Lower lobe of right lung (tissue), 2 donors: ENCODE measurements at regions of chr22 and their contacts with region 1.

Region 1: GRCh38 chr22:22446517-22446916 is 62.0 kb downstream of the ZNF280B start:
- DNase-seq: no peak
- ATAC-seq: no peak
- H3K4me3 ChIP-seq: no peak overlapping the region
- H3K27ac ChIP-seq: no peak overlapping the region
- H3K4me1 ChIP-seq: no peaks in the 10 kb centered on the region
- H3K27me3 ChIP-seq: no peaks in the 10 kb centered on the region
- CTCF ChIP-seq: no peak

Region 2: GRCh38 chr22:22508274-22509176 is 62.0 kb after region 1 on chr22 and contains the start of gene ZNF280B:
- intact Hi-C with region 1: loop called (anchors 10 kb)
- DNase-seq: peak; percentile 76
- ATAC-seq: peak; percentile 93 to 97
- H3K4me3 ChIP-seq: peak within 1 kb of the TSS; percentile 52
- H3K27ac ChIP-seq: no peak within 1 kb of the TSS
- H3K4me1 ChIP-seq: no peaks in the 10 kb centered on the region
- H3K27me3 ChIP-seq: no peaks in the 10 kb centered on the region
- CTCF ChIP-seq: peak; percentile 40
- total RNA-seq, gene ZNF280B: 0.86 TPM

Region 3: GRCh38 chr22:22616636-22617035 is 170.1 kb after region 1 on chr22:
- intact Hi-C with region 1: no loop called
- DNase-seq: no peak
- ATAC-seq: no peak
- H3K4me3 ChIP-seq: no peak overlapping the region
- H3K27ac ChIP-seq: no peak overlapping the region
- H3K4me1 ChIP-seq: no peaks in the 10 kb centered on the region
- H3K27me3 ChIP-seq: peaks cover 4% of the 10 kb centered on the region
- CTCF ChIP-seq: no peak